T-cell (primary cell): ENCODE measurements at regions of chr14 and their contacts with region 1.

Region 1: DNA sequence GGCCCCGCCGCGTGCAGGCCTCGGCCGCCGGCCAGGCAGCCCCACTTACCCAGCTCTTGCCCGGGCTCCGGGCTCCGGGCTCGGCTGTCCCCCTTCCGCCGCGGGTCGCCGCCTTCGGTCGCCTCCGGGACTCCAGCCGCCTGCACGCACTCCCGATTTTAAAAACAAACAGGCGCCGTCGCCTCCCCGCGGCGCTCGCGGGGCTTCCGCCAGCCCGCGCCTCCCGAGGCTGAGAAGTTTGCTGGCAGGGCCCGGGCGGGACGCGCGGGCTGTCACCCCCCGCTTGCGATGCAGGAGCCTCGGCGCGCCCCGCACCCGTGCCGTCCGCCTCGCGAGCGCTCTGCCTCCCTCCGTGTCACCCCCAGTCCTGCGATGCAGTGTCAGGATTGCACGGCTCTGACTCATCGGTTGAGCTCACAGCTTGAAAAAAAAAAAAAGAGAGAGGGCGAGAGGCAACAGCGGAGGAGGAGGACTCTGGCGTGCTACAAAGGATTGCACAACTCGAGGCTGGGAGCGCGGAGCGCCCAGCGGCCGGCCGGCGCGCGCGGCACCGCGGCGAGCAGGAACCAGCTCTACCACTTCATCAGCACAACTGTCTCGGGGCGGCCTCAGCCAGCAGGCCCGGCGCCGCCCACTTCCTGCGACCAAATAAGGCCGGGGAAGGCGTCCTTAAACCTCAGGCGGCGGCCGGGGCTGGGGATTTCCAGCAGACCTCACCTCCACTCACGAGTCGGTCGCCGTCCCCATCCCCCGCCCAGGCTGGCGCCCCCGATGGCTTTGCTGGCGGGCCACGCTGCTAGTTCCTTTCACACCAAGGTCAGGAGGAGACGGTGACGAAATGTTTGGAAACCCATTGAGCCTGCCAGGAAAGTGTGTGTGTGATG is 45.8 kb upstream of the PNMA1 start:
- DNase-seq: peak; percentile 89 to 99 (median 97)
- ATAC-seq: peak; percentile 78 to 87 (median 80)
- H3K4me3 ChIP-seq: peak overlapping the region; percentile 58 to 78
- H3K4me3 Mint-ChIP-seq: peak overlapping the region; percentile 85 to 87 (median 87)
- H3K27ac ChIP-seq: peak overlapping the region; percentile 90
- H3K27ac Mint-ChIP-seq: peak overlapping the region; percentile 96 to 97
- H3K4me1 ChIP-seq: peaks cover 40 to 75% of the 10 kb centered on the region in 2 experiments
- H3K4me1 Mint-ChIP-seq: peaks cover 75 to 83% (median 82%) of the 10 kb centered on the region in 3 donors
- H3K27me3 ChIP-seq: no peaks in the 10 kb centered on the region
- H3K27me3 Mint-ChIP-seq: no peaks in the 10 kb centered on the region

Region 2: DNA sequence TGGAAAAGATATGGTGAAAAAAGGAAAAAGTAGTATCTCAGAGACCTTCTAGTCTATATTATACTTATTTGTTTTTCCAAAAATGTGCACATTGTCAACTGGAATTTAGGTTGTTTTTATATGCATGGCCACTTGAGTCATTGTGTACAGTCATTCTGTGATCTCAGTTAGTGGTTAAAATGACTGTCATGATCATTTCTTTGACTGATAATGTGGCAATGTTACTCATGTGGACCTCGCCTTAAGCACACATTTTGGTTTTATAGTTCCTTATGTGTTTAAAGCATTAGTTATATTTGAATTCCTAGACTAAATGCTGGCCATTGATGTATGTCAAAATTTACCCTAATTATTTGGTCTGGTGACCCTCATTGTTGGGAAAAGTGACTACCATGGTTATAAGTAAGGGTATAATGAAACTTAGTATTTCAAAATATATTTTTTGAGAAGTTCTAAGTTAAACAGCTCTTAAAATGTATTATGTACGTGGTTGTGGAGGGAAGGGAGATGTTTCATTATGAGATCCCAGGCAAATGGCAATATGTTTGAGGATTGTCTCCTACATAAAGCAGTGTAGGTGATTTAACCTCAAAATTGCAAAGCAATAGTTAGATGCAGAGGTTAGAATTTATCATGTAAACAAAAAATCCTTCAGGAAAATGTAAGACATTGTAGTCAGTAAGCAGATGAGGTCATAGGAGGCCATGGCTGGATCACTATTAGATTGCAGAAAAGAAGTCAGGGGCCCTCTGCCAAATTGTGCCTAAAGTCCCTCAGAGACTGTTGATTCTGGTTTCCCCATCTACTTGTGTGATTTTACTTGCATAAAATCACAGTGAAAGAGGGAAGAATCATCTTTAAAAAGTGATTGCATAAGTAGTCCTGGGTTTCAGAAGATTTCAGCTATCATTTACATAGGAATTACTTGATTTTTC is 63.2 kb before region 1 on chr14:
- CTCF ChIA-PET with region 1: no interaction called
- POLR2A ChIA-PET with region 1: no interaction called
- DNase-seq: no peak
- ATAC-seq: peak in 1 of 4 experiments; percentile 35
- H3K4me3 ChIP-seq: no peak overlapping the region
- H3K4me3 Mint-ChIP-seq: no peak overlapping the region
- H3K27ac ChIP-seq: no peak overlapping the region
- H3K27ac Mint-ChIP-seq: no peak overlapping the region
- H3K4me1 ChIP-seq: no peaks in the 10 kb centered on the region
- H3K4me1 Mint-ChIP-seq: peaks cover 0 to 13% (median 7%) of the 10 kb centered on the region in 3 donors
- H3K27me3 ChIP-seq: no peaks in the 10 kb centered on the region
- H3K27me3 Mint-ChIP-seq: no peaks in the 10 kb centered on the region

Region 3: GRCh38 chr14:73741386-73741875 is 18.5 kb before region 1 on chr14:
- CTCF ChIA-PET with region 1: interaction called, 4 to 24 read pairs
- POLR2A ChIA-PET with region 1: interaction called, 3 to 5 read pairs
- DNase-seq: peak in 28 of 35 experiments; percentile 32 to 80 (median 46)
- ATAC-seq: peak; percentile 71 to 79 (median 76)
- H3K4me3 ChIP-seq: peak overlapping the region; percentile 16 to 42
- H3K4me3 Mint-ChIP-seq: peak overlapping the region; percentile 66 to 90 (median 70)
- H3K27ac ChIP-seq: peak overlapping the region; percentile 86
- H3K27ac Mint-ChIP-seq: peak overlapping the region; percentile 93 to 96
- H3K4me1 ChIP-seq: peaks cover 51 to 81% of the 10 kb centered on the region in 2 experiments
- H3K4me1 Mint-ChIP-seq: peaks cover 59 to 70% (median 68%) of the 10 kb centered on the region in 3 donors
- H3K27me3 ChIP-seq: no peaks in the 10 kb centered on the region
- H3K27me3 Mint-ChIP-seq: no peaks in the 10 kb centered on the region

Region 4: GRCh38 chr14:73771848-73772638 is 12.1 kb after region 1 on chr14:
- CTCF ChIA-PET with region 1: interaction called in 1 of 2 experiments, 11 read pairs
- POLR2A ChIA-PET with region 1: interaction called, 6 to 10 read pairs
- DNase-seq: peak; percentile 28 to 77 (median 53)
- ATAC-seq: peak; percentile 80 to 87 (median 87)
- H3K4me3 ChIP-seq: no peak overlapping the region
- H3K4me3 Mint-ChIP-seq: peak overlapping the region; percentile 35 to 67 (median 60)
- H3K27ac ChIP-seq: peak overlapping the region; percentile 75
- H3K27ac Mint-ChIP-seq: peak overlapping the region; percentile 85 to 93
- H3K4me1 ChIP-seq: peaks cover 32 to 79% of the 10 kb centered on the region in 2 experiments
- H3K4me1 Mint-ChIP-seq: peaks cover 74 to 82% (median 76%) of the 10 kb centered on the region in 3 donors
- H3K27me3 ChIP-seq: no peaks in the 10 kb centered on the region
- H3K27me3 Mint-ChIP-seq: no peaks in the 10 kb centered on the region

Region 5: DNA sequence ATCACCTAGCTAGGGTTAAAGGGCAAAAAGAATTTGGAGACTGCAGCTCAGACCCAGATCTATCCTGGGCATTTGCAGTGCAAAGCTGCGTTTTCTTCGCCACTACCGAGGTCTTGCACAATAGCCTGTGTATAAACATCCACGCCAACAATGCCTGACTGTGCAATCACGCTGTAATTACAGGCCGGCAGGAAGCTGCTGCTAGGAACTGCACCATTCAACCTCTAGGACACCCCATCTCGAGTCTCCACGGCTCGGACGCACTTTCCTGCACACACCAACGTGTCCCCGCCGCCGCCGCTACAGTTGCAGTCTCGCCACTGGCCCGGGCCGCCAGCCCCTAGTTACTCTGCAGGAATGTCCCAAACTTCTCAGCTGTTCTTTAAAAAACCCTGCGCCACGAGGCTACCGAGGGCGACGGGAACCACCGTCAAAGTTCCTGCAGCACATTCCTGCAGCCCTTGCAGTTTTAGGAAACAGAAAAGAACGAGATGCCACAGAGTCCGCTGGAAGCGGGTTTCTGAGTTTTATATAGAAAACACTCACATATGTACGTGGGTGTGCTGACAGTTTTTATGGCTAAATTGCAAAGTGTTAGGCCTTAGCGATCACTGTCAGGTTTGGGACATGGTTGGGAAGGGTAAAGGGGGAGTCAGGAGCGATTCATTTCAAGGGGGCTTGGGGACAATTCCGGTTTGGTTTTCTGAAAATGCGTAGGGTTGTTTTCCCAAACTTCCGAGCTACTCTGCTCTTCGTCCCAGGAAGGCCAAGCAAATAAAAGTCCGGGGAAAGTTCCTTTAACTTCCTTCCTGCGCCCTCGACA is 26.1 kb after region 1 on chr14:
- CTCF ChIA-PET with region 1: interaction called, 5 to 18 read pairs
- POLR2A ChIA-PET with region 1: interaction called, 3 to 23 read pairs
- DNase-seq: peak; percentile 34 to 76 (median 59)
- ATAC-seq: peak; percentile 59 to 65 (median 62)
- H3K4me3 ChIP-seq: peak overlapping the region; percentile 81 to 85
- H3K4me3 Mint-ChIP-seq: peak overlapping the region; percentile 95
- H3K27ac ChIP-seq: peak overlapping the region; percentile 73
- H3K27ac Mint-ChIP-seq: peak overlapping the region; percentile 96
- H3K4me1 ChIP-seq: peaks cover 36 to 57% of the 10 kb centered on the region in 2 experiments
- H3K4me1 Mint-ChIP-seq: peaks cover 65 to 70% (median 68%) of the 10 kb centered on the region in 3 donors
- H3K27me3 ChIP-seq: no peaks in the 10 kb centered on the region
- H3K27me3 Mint-ChIP-seq: no peaks in the 10 kb centered on the region

Region 6: DNA sequence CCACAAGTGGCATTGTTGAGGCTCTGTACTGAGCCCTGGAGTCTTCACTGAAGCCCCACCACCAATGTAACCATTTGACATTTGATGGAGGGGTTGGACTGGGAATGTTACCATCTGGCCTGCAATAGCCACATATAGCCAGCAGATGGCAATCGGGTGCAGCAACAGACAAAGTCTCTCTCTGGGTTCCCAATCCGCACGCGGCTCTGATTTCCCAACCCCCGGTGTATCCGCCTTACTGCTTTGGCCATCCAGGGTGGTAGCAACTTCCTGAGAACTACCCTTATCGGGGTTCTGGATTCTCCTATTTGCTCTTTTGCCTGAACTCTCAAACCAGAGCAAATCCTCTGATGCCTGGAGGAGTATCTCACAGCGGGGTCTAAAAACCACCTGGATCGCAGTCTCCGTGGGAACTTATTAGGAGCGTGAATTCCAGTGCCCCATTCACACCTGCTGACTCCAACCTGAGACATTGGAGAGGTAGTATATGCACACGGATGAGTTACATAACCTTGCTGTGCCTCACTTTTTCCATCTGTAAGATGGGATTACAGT is 602.5 kb after region 1 on chr14:
- CTCF ChIA-PET with region 1: no interaction called
- POLR2A ChIA-PET with region 1: no interaction called
- DNase-seq: peak; percentile 10 to 75 (median 50)
- ATAC-seq: peak; percentile 62 to 78 (median 74)
- H3K4me3 ChIP-seq: no peak overlapping the region
- H3K4me3 Mint-ChIP-seq: no peak overlapping the region
- H3K27ac ChIP-seq: no peak overlapping the region
- H3K27ac Mint-ChIP-seq: no peak overlapping the region
- H3K4me1 ChIP-seq: peaks cover 0 to 3% of the 10 kb centered on the region in 2 experiments
- H3K4me1 Mint-ChIP-seq: peaks cover 0 to 2% (median 0%) of the 10 kb centered on the region in 3 donors
- H3K27me3 ChIP-seq: peaks cover 0 to 33% of the 10 kb centered on the region in 2 experiments
- H3K27me3 Mint-ChIP-seq: peaks cover 11 to 14% of the 10 kb centered on the region in 2 donors